ENCODE measurements at regions of chr10 and their contacts with region 1.

Region 1: DNA sequence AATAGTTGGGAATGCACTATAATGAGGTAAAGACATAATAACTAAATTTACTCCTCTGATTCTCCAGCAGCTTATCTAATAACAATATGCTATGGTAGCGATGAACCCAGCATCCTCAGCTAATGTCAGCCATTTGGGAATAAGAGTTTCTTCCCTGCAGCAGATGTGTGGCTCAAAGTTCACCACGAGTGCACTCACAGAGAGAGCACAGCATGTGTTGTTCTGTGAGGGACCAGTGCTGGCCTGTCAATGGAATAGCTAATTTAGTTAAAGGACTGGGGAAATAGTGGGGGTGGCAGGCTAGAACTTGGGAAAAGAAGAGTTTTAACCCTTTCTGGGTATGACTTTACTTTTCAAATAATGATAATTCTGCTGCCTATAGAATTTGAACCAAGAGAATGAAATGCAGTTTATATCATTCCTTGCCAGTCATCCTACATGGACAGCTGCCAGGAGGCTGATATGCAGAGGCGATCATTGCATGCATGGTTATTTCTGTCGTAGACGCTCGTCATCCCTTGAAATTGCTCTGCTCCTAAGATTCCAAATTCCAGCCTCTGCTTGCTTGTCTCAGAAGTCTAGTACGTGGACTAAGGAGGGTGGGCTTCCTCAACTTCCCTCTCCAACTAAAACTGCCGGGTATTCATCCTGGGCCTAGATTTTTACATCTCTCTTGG is 355.6 kb downstream of the RNLS start:
- DNase-seq: no peak
- H3K4me3 ChIP-seq: no peak overlapping the region
- H3K27ac ChIP-seq: no peak overlapping the region
- H3K4me1 ChIP-seq: no peaks in the 10 kb centered on the region
- H3K27me3 ChIP-seq: no peaks in the 10 kb centered on the region
- CTCF ChIP-seq: no peak

Region 2: DNA sequence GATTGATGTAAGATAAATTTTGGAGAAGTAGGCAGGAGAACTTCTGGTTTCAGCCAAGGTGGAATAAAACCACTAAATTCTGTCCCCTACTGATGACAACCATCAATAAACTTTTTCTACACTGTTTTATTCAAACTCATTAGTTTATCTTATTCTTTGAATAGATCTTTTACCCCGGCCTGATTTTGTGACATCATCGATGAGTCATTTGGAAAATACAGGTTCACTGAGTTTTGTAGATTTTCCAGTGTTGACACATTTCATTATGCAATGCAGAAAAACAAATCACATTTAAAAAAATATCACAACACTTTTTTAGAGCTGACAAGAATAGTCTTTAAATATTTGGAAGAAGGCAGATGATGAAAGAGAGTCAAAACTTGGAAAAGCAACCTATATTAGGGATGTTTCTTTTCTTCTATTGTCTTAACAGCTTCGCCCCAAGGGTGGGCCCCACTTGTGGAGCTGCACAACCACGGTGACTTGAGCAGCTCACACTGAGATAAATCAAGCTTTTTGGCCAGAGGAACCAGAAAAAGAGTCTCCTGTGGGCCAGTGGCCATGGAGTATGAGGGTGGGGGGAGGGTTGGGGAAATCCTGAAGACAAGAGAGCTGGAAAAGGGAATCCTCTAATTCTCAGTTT is 251.3 kb before region 1 on chr10:
- CTCF ChIA-PET with region 1: interaction called, 11 read pairs
- POLR2A ChIA-PET with region 1: no interaction called
- intact Hi-C with region 1: no loop called
- DNase-seq: no peak
- H3K4me3 ChIP-seq: no peak overlapping the region
- H3K27ac ChIP-seq: no peak overlapping the region
- H3K4me1 ChIP-seq: no peaks in the 10 kb centered on the region
- H3K27me3 ChIP-seq: no peaks in the 10 kb centered on the region
- CTCF ChIP-seq: no peak